T-cell (primary cell): ENCODE measurements at regions of chr12 and their contacts with region 1.

Region 1: DNA sequence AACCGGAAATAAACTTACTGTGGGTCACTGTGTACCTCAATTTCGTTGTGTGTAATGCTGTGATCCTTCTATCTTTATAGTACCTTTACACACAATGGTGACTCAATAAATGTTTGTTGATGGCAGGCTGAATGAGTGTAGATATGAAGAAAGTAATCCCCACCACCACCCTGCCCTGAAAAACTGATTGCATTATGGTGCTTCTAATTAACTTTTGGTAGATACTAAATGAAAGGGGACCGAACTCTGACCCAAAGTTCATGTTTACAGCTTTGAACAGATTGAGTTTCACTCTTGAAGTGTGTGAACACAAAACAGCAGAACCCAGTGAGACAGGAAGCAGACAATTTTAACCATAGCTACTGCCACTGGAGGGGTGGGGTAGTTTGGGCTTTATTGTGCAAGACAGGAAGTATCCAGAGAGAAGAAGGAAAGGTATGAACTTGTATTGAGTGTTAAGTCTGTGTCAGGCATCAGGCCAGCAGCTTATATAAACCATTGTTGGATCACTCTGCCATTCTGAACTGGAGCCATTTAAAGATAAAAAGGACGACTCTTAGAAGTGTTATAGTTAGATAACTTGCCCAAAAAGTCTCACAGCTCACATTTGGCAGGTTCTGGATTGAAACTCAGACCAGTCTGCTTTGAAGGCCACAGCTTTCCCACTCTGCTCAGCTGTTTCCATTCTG is 197.0 kb upstream of the AMIGO2 start:
- DNase-seq: peak; percentile 29 to 83 (median 62)
- ATAC-seq: peak; percentile 95 to 99 (median 96)
- H3K4me3 ChIP-seq: peak overlapping the region; percentile 16 to 41
- H3K4me3 Mint-ChIP-seq: peak overlapping the region; percentile 22 to 65 (median 50)
- H3K27ac ChIP-seq: peak overlapping the region; percentile 92
- H3K27ac Mint-ChIP-seq: peak overlapping the region; percentile 81 to 93
- H3K4me1 ChIP-seq: peaks cover 35 to 57% of the 10 kb centered on the region in 2 experiments
- H3K4me1 Mint-ChIP-seq: peaks cover 75 to 90% (median 75%) of the 10 kb centered on the region in 3 donors
- H3K27me3 ChIP-seq: no peaks in the 10 kb centered on the region
- H3K27me3 Mint-ChIP-seq: no peaks in the 10 kb centered on the region

Region 2: DNA sequence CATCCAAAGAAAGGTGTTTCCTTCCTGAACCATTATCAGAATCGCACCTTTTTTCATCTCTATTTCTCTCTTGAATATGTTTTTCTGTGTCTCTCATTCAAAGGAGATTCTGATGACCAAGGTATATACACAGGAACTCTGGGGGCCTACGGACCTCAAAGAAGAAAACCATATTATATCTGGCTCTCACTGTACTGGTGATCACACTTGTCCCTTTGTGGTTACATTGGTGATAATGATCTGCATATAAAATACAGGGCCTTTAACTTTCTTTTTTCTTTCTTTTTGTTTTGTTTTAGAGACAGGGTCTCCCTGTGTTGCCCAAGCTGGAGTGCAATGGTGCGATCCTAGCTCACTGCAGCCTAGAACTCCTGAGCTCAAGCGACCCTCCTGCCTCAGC is 11.8 kb before region 1 on chr12:
- CTCF ChIA-PET with region 1: no interaction called
- POLR2A ChIA-PET with region 1: no interaction called
- DNase-seq: no peak
- ATAC-seq: no peak
- H3K4me3 ChIP-seq: no peak overlapping the region
- H3K4me3 Mint-ChIP-seq: no peak overlapping the region
- H3K27ac ChIP-seq: no peak overlapping the region
- H3K27ac Mint-ChIP-seq: no peak overlapping the region
- H3K4me1 ChIP-seq: peaks cover 12 to 19% of the 10 kb centered on the region in 2 experiments
- H3K4me1 Mint-ChIP-seq: peaks cover 41 to 49% (median 46%) of the 10 kb centered on the region in 3 donors
- H3K27me3 ChIP-seq: no peaks in the 10 kb centered on the region
- H3K27me3 Mint-ChIP-seq: no peaks in the 10 kb centered on the region

Region 3: DNA sequence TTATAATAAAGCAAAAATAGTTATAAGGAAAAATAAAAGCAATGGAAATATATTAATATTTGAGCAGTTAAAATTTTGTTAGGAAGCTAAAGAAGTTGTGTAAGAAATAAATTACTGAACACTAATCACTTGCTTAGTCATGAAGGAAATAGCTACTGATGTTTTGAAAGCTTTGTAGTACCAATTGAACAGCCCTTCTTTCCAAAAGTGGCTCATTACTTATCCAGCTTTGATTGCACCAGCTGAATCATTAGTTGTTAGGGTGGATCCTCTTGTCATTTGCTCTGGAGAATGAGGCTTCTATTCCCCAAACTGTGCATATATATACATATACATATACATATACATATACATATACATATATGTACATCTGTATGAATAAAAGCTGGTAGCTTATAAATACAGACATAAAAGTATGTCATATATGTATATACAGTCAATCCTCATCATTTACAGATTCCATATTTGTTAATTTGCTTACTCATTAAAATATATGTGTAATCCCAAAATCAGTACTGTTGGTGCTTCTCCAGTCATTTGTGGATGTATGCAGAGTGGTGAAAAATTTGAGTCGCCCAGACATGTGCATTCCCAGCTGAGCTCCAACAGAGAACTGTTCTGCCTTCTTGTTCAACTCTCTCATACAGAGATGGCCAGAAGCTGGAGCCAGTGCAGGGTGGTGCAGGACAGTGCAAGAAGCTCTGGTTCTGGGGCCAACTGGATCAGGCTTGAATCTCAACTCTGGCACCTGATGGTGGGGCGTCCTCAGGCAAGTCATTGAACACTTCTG is 214.9 kb after region 1 on chr12:
- CTCF ChIA-PET with region 1: no interaction called
- POLR2A ChIA-PET with region 1: no interaction called
- DNase-seq: no peak
- ATAC-seq: no peak
- H3K4me3 ChIP-seq: no peak overlapping the region
- H3K4me3 Mint-ChIP-seq: no peak overlapping the region
- H3K27ac ChIP-seq: no peak overlapping the region
- H3K27ac Mint-ChIP-seq: no peak overlapping the region
- H3K4me1 ChIP-seq: peaks cover 0 to 4% of the 10 kb centered on the region in 2 experiments
- H3K4me1 Mint-ChIP-seq: peaks cover 0 to 10% (median 8%) of the 10 kb centered on the region in 3 donors
- H3K27me3 ChIP-seq: no peaks in the 10 kb centered on the region
- H3K27me3 Mint-ChIP-seq: peaks cover 7 to 14% of the 10 kb centered on the region in 2 donors

Region 4: GRCh38 chr12:48946205-48946604 is 1669.4 kb after region 1 on chr12:
- CTCF ChIA-PET with region 1: no interaction called
- POLR2A ChIA-PET with region 1: interaction called in 1 of 2 experiments, 13 read pairs
- DNase-seq: no peak
- ATAC-seq: no peak
- H3K4me3 ChIP-seq: no peak overlapping the region
- H3K4me3 Mint-ChIP-seq: no peak overlapping the region
- H3K27ac ChIP-seq: no peak overlapping the region
- H3K27ac Mint-ChIP-seq: peak overlapping the region in 1 of 2 donors; percentile 53
- H3K4me1 ChIP-seq: peaks cover 0 to 4% of the 10 kb centered on the region in 2 experiments
- H3K4me1 Mint-ChIP-seq: peaks cover 26 to 30% (median 29%) of the 10 kb centered on the region in 3 donors
- H3K27me3 ChIP-seq: no peaks in the 10 kb centered on the region
- H3K27me3 Mint-ChIP-seq: no peaks in the 10 kb centered on the region